Activated CD8-positive, alpha-beta T cell treated with anti-CD3 and anti-CD28 coated beads, Interleukin-2, amount 10 ng/mL, durations not matched to agents 7 days and 5 days (primary cell): ENCODE measurements at regions of chr2 and their contacts with region 1.

Region 1: DNA sequence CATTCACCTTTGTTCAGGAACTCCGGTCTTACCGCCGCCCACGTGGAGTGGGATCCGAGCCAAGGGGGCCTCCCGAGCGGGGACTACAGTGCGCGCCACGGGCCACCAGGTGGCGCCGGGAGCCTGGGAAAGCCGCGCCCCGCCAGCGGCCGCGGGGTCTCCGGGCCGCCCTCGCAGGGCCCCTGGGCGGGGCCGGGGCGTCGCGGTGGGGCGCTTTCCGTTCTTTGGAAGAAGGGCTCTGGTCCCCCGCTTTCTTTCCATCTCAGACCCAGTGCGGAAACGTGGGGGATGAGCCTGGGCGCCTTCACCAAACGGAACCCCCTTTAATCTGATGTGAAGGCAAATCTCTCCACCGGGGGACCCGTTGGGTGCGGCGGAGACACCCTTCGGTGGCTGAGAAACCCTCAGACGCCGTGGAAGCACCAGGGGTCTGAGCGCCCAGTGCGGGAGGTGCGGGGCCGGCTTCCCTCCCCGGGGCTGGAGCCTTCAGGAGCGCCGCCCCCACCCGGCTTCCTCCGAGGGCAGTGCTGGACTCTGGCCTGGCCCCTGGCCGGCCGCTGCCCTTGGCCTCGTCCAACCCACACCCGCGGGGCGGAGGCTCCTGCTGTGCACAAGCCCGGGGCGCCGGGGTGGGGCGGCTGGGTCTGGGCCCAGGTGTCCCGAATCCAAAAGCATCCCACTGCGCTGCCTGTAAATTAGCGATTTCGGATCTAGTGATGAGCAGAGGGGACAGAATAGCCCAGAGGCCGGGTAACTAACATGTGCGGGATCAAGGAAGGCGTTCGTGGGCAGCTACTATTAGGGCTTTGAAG is 44.6 kb downstream of the GORASP2 start:
- DNase-seq: peak; percentile 85
- ATAC-seq: peak; percentile 97
- H3K4me3 Mint-ChIP-seq: peak overlapping the region; percentile 76
- H3K27ac Mint-ChIP-seq: peak overlapping the region; percentile 79
- H3K4me1 Mint-ChIP-seq: peaks cover 14% of the 10 kb centered on the region
- H3K27me3 Mint-ChIP-seq: peaks cover 2% of the 10 kb centered on the region

Region 2: GRCh38 chr2:170587922-170588321 is 385.8 kb before region 1 on chr2:
- CTCF ChIA-PET with region 1: no interaction called
- POLR2A ChIA-PET with region 1: no interaction called
- DNase-seq: no peak
- ATAC-seq: no peak
- H3K4me3 Mint-ChIP-seq: no peak overlapping the region
- H3K27ac Mint-ChIP-seq: no peak overlapping the region
- H3K4me1 Mint-ChIP-seq: no peaks in the 10 kb centered on the region
- H3K27me3 Mint-ChIP-seq: peaks cover 7% of the 10 kb centered on the region

Region 3: GRCh38 chr2:170950221-170950761 is 23.4 kb before region 1 on chr2:
- CTCF ChIA-PET with region 1: interaction called, 10 read pairs
- POLR2A ChIA-PET with region 1: no interaction called
- DNase-seq: no peak
- ATAC-seq: no peak
- H3K4me3 Mint-ChIP-seq: no peak overlapping the region
- H3K27ac Mint-ChIP-seq: no peak overlapping the region
- H3K4me1 Mint-ChIP-seq: no peaks in the 10 kb centered on the region
- H3K27me3 Mint-ChIP-seq: no peaks in the 10 kb centered on the region

Region 4: DNA sequence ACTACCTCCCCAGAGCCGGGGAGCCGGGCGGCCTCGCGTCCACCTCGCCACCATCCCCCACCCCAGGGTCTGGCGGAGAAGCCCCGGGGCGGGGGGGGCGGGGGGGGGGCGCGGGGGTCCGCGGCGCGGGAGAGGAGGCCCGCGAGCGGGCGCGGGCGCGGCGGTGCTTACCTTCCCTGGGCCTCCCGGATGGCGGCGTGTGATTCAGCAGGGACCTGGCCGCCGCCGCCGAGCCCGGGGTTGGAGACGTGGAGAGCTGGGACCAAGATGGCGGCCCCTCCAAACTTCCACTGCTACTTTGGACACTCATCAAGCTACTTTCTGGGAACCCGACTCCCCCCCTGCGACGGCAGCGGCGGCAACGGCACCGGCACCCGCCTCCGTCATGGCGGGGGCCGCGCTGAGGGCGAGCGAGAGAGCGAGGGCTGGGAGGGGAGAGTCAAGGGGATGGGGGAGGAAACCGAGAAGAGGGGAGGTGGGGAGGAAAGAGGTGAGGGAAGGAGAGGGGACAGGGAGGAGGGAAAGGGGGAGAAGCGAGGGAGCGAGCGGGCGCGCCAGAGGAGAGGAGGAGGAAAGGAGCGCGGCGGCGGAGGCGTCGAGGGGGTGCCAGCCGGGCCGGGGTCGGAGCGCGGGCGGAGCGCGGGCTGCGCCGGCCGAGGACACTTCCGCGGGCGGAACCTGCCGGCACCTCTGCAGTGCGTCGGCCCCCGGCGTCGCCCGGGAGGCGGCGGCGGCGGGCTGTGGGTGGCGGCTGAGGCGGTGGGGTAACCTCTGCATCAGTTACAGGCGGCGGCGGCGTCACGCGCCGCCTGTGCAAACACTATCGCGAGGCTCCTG is 186.6 kb after region 1 on chr2 and contains the start of gene TLK1:
- CTCF ChIA-PET with region 1: interaction called, 48 read pairs
- POLR2A ChIA-PET with region 1: interaction called, 7 read pairs
- DNase-seq: peak; percentile 79
- ATAC-seq: peak; percentile 69
- H3K4me3 Mint-ChIP-seq: peak within 1 kb of the TSS; percentile 99
- H3K27ac Mint-ChIP-seq: peak within 1 kb of the TSS; percentile 96
- H3K4me1 Mint-ChIP-seq: peaks cover 57% of the 10 kb centered on the region
- H3K27me3 Mint-ChIP-seq: no peaks in the 10 kb centered on the region
- total RNA-seq, gene TLK1: 89.1 to 96.3 TPM